Calu3 (cell line): ENCODE measurements at regions of chrX and their contacts with region 1.

Region 1: DNA sequence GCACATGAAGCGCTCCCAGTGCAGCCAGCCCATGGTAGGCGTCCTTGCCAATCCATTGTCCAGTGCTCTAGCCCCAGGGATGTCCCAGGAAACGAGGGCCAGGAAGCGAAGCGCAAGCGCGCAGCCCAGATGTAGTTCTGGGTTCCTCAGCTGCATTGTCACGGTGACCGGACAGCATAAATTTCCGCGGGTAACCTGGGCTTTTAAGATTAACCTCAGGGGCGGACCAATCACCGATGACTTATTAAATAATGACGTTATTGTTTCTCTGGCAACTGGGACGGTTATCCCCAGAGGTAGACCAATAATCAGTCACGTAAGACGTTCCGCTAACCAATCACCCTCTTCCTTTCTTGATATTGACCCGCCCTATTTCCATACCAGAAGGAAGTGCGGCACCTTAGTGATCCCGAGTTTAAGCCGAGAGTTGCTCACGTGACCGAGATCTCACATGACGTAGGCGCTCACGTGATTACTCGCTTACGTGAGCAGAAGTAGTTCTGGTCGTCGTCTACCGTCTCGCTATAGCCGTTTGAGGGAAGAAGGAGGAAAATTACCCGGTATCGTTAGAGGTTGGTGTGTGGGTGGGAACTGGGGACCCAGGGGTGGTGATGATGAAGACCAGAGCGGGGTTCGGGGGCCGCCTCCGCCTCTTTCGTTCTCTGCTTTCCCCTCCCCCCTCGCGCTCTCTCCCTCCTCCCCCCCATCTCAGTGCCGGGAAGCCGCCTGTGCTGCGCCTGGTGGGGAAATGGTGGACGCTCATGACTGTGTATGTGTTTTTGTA is at the starts of genes GLA and HNRNPH2:
- DNase-seq: peak; percentile 84
- H3K4me3 Mint-ChIP-seq: peak within 1 kb of the TSS; percentile 80
- H3K27ac Mint-ChIP-seq: peak within 1 kb of the TSS; percentile 90
- H3K4me1 Mint-ChIP-seq: peaks cover 15% of the 10 kb centered on the region
- H3K27me3 Mint-ChIP-seq: no peaks in the 10 kb centered on the region
- CTCF ChIP-seq: no peak
- total RNA-seq, gene GLA: 61.2 and 63.6 TPM in 2 replicates
- total RNA-seq, gene HNRNPH2: 71.8 and 74.2 TPM in 2 replicates

Region 2: DNA sequence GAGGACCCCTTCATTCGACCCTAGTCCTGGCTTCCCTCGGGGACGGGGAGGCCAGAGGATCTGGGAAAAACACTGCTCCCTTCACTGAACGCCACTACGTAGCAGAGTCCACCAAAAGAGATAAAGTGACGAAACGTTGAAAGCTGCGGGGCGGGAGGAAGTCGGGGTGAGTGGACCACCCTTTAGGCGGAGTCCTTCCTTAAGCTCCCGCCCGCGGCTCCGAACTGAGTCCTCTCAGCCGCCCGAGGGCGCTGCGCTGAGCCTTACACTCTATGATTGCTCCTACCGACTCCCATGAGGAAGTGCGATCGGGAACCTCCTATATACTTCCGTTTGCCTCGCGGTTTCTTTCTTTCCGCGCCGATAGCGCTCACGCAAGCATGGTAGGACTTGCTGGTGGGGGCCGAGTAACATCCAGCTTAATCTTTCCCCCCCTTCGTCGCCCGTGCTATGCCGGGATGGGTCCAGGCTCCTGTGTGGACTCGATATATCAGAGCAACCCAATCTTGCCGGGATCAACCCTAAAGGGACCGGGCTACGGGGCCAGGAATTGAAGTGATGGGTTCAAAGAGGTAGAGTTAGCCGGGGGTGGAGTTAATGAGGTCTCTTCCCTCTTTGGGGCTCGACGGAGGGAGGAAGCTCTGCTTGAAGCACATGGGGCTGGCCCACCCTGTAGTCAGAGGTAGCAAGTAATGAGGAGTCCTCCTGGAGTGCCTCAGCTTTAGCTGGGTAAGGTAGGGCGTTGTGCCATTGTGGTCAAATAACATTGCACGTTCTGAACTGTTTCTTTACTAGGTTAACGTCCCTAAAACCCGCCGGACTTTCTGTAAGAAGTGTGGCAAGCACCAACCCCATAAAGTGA is 17.0 kb before region 1 on chrX and contains the start of gene RPL36A:
- CTCF ChIA-PET with region 1: no interaction called
- intact Hi-C with region 1: loop called (anchors 2 kb)
- DNase-seq: peak; percentile 85
- H3K4me3 Mint-ChIP-seq: peak within 1 kb of the TSS; percentile 88
- H3K27ac Mint-ChIP-seq: peak within 1 kb of the TSS; percentile 96
- H3K4me1 Mint-ChIP-seq: peaks cover 15% of the 10 kb centered on the region
- H3K27me3 Mint-ChIP-seq: peaks cover 11% of the 10 kb centered on the region
- CTCF ChIP-seq: peak; percentile 59
- total RNA-seq, gene RPL36A: 238 and 239 TPM in 2 replicates